Activated CD4-positive, alpha-beta memory T cell treated with anti-CD3 and anti-CD28 coated beads for 36 hours (primary cell): ENCODE measurements at regions of chr14 and their contacts with region 1.

Region 1: GRCh38 chr14:34059855-34060638 is 109.2 kb upstream of the EGLN3 start:
- DNase-seq: peak; percentile 69
- H3K4me3 Mint-ChIP-seq: peak overlapping the region; percentile 76
- H3K27ac Mint-ChIP-seq: peak overlapping the region; percentile 34
- H3K4me1 Mint-ChIP-seq: peaks cover 8% of the 10 kb centered on the region
- H3K27me3 Mint-ChIP-seq: peaks cover 11% of the 10 kb centered on the region

Region 2: GRCh38 chr14:34018564-34019244 is 41.3 kb before region 1 on chr14:
- CTCF ChIA-PET with region 1: no interaction called
- POLR2A ChIA-PET with region 1: interaction called, 4 read pairs
- intact Hi-C with region 1: loop called (anchors 5 kb)
- DNase-seq: no peak
- H3K4me3 Mint-ChIP-seq: peak overlapping the region; percentile 61
- H3K27ac Mint-ChIP-seq: peak overlapping the region; percentile 71
- H3K4me1 Mint-ChIP-seq: peaks cover 10% of the 10 kb centered on the region
- H3K27me3 Mint-ChIP-seq: peaks cover 1% of the 10 kb centered on the region